Endothelial cell of umbilical vein (primary cell): ENCODE measurements at regions of chr19 and their contacts with region 1.

Region 1: DNA sequence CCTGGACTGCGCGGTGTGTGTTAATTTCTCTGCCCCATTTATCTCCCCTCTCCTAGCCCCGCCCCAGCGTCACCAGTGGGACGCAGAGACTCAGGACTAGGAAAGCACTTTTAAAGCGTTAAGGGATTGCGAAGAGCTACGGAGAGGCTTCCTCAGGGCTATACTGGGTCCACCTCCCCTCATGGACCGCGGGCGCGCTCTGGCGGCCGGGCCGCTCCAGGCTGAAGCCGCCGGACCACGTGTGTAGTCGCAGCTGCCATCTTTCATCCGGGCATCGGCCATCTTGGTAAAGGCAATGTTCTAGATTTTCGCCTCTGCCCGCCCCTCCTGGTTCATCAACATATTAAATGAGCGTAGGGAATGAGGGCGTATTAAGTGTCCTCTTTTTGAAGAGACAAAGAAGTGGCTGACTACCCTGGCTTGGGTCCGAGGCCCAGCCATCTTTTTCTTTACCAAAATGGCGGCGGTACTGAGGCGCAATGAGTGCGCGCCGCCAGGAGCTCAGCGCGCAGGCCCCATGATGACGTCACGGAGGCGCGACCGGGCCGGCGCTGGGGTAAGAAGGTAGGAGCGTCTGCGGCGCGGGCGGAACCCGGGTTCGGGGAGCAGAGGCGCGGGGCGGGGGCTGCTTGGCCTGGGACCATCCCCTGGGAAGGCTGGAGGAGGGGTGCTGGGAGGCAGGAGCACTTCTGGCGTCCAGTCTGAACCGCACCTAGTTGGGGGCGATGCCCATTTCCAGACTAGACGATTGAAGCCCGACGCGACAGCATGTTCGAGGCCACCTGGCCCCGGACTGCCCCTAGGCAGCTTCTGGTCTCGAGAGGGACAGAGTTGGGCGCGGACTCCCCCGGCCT is at the start of gene CCDC124:
- DNase-seq: peak; percentile 92
- H3K4me3 ChIP-seq: peak within 1 kb of the TSS; percentile 93 to 98 (median 95)
- H3K27ac ChIP-seq: peak within 1 kb of the TSS; percentile 91
- H3K4me1 ChIP-seq: peaks cover 16% of the 10 kb centered on the region
- H3K27me3 ChIP-seq: no peaks in the 10 kb centered on the region
- CTCF ChIP-seq: peak; percentile 92 to 96
- POLR2A ChIP-seq: peak; percentile 78
- total RNA-seq, gene CCDC124: 115 and 123 TPM in 2 replicates

Region 2: DNA sequence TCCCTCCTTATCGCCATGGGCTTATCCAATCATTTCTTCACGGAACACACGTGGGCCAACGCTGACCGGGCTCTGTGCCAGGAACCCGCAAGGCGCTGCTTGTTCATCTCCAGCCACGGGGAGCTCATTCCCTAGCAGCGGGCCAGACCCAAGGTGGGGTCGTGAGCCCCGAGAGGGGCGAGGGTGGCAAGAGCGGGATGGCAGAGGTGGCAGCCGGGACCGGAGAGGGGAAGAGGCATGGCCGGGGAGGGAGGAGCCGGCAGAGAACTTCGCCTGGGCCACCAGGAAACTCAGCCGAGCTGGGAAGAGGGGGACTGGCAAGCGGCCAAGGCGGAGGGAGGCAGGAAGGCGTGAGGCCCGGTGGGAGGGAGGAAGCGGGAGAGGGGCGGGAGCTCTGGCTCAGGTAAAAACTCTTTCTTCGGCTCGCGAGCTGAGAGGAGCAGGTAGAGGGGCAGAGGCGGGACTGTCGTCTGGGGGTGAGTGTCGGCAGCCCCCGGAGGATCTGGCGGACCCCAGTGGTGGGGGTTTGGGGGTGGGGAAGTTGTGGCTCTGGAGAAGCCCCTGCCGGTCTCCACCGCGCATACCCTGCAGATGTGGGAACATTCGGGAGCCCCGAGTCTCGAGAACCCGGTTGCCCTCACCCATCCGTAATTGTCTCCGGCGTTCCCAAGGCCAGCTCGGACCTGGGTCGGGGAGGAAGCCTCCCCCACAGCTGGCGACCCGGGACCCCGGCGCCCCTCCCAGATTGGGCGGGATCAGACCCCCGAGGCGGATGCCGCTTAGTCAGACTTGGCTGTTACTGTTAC is 137.8 kb before region 1 on chr19 and contains the start of gene B3GNT3:
- CTCF ChIA-PET with region 1: no interaction called
- POLR2A ChIA-PET with region 1: no interaction called
- dilution Hi-C with region 1: no loop called
- intact Hi-C with region 1: loop called (anchors 5 kb)
- DNase-seq: no peak
- H3K4me3 ChIP-seq: peak within 1 kb of the TSS in 1 of 3 experiments; percentile 16
- H3K27ac ChIP-seq: no peak within 1 kb of the TSS
- H3K4me1 ChIP-seq: peaks cover 3% of the 10 kb centered on the region
- H3K27me3 ChIP-seq: peaks cover 13 to 14% of the 10 kb centered on the region in 2 experiments
- CTCF ChIP-seq: no peak
- POLR2A ChIP-seq: no peak
- total RNA-seq, gene B3GNT3: not detected in 2 replicates

Region 3: GRCh38 chr19:17865364-17866311 is 67.1 kb before region 1 on chr19:
- CTCF ChIA-PET with region 1: interaction called, 118 read pairs
- POLR2A ChIA-PET with region 1: interaction called, 3 read pairs
- dilution Hi-C with region 1: no loop called
- intact Hi-C with region 1: loop called (anchors 1 kb)
- DNase-seq: no peak
- H3K4me3 ChIP-seq: no peak overlapping the region
- H3K27ac ChIP-seq: no peak overlapping the region
- H3K4me1 ChIP-seq: peaks cover 11% of the 10 kb centered on the region
- H3K27me3 ChIP-seq: peaks cover 21 to 22% of the 10 kb centered on the region in 2 experiments
- CTCF ChIP-seq: no peak
- POLR2A ChIP-seq: peak; percentile 82

Region 4: GRCh38 chr19:17873786-17874757 is 58.6 kb before region 1 on chr19:
- CTCF ChIA-PET with region 1: interaction called, 118 read pairs
- POLR2A ChIA-PET with region 1: interaction called, 3 read pairs
- dilution Hi-C with region 1: no loop called
- intact Hi-C with region 1: loop called (anchors 1 kb)
- DNase-seq: no peak
- H3K4me3 ChIP-seq: no peak overlapping the region
- H3K27ac ChIP-seq: no peak overlapping the region
- H3K4me1 ChIP-seq: no peaks in the 10 kb centered on the region
- H3K27me3 ChIP-seq: peaks cover 32 to 44% of the 10 kb centered on the region in 2 experiments
- CTCF ChIP-seq: no peak
- POLR2A ChIP-seq: no peak

Region 5: DNA sequence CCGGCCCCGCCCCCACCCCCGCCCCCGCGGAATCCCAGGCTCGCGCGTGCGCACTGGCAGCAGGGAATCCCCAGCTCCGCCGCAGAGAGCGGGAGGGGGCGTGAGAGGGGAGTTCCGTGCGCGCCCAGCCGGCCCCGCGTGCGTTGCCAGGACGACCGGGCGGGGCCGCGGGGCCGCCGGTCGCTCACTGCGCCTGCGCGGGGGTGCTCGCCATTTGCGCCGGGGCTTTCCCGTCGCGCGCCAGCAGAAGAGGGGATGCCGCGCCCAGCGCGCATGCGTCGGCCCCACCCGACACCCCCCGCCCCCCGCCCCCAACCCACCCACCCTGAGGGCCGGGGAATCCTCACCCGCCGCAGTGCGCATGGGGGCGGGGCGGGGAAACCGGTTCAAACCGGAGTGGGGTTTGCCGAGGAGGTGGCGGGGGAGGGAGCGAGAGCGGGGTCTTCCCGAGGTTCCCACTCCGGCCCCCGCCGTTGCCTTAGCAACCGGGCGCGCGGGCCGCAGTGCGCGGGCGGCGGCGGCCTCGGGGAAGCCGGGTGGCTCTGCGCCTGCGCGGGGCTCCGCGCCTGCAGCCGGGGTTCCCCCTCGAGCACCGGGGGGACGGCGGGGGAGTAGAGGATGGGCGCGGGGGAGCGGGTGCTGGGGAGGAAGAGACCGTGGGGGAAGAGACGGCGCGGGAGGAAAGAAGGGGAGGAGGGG is 15.3 kb after region 1 on chr19:
- CTCF ChIA-PET with region 1: interaction called, 19 read pairs
- POLR2A ChIA-PET with region 1: interaction called, 3 read pairs
- dilution Hi-C with region 1: no loop called
- intact Hi-C with region 1: loop called (anchors 2 kb)
- DNase-seq: peak; percentile 93
- H3K4me3 ChIP-seq: peak overlapping the region in 2 of 3 experiments; percentile 36 to 54
- H3K27ac ChIP-seq: no peak overlapping the region
- H3K4me1 ChIP-seq: peaks cover 8% of the 10 kb centered on the region
- H3K27me3 ChIP-seq: peaks cover 39 to 40% of the 10 kb centered on the region in 2 experiments
- CTCF ChIP-seq: no peak
- POLR2A ChIP-seq: no peak

Region 6: DNA sequence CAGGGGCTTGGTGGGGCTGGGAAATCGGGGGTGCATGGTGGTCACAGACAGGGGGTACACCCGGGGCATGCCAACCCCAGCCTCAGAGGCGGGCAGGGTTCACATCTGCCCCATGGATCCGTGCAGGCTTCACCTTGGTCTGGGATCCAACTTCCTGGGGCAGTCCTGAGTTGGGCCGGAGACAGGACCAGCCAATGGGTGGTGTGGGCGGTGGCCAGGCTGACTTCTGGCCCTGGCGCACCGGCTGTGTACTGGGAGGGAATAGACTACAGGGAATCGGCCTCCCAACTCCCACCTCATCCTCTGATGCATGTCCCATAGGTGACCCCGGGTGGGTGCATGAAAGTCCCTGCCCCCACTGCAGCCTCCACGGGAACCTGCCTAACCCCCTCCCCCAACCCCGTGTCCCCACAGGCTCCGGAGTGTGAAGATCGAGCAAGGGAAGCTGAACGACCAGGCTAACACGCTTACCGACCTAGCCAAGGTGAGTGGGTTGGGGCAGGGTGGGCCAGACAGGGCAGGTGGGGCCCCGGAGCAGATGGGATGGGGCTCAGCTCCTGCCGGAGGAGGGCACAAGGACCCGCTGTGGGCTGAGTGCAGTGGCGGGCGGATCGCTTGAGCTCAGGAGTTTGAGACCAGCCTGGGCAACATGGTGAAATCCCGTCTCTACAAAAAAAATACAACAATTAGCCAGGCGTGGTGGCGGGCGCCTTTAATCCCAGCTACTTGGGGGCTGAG is 60.5 kb after region 1 on chr19:
- CTCF ChIA-PET with region 1: interaction called, 203 read pairs
- POLR2A ChIA-PET with region 1: no interaction called
- dilution Hi-C with region 1: no loop called
- intact Hi-C with region 1: no loop called
- DNase-seq: no peak
- H3K4me3 ChIP-seq: no peak overlapping the region
- H3K27ac ChIP-seq: no peak overlapping the region
- H3K4me1 ChIP-seq: no peaks in the 10 kb centered on the region
- H3K27me3 ChIP-seq: no peaks in the 10 kb centered on the region
- CTCF ChIP-seq: no peak
- POLR2A ChIP-seq: no peak

Region 7: DNA sequence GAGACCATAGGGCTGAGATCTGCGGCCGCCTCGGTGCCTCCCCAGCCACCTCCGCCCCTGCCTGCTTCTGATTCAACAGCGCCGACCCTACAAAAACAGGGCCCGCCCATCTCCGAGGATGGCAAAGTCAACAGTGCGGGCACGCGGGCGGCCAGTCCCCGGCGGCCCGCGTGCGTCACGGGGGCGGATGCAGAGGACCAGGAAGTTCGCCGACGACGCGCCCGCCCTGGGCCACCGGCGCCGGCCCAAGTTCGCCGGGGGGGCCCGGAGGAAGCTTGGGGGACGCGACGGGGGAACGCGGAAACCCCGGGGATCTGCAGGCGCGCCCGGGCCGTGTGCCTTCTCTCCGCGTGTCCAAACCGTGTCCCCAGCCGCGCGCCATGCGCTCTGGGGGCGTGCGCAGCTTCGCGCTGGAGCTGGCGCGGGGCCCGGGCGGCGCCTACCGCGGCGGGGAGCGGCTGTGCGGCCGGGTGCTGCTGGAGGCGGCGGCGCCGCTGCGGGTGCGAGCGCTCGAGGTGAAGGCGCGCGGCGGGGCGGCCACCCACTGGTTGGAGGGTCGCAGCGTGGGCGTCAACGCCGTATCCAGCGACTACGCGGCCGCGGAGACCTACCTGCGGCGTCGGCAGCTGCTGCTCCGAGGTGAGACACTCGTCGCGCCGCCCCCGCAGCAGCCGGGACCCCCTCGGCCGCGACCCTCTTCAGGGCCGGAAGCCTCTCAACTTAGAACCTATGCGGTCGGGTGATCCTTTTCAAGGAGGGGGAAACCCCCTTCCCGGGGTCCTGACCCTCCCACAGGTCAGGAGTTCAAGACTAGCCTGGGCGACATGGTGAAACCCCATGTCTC is 68.4 kb after region 1 on chr19:
- CTCF ChIA-PET with region 1: interaction called, 203 read pairs
- POLR2A ChIA-PET with region 1: no interaction called
- dilution Hi-C with region 1: no loop called
- intact Hi-C with region 1: no loop called
- DNase-seq: peak; percentile 82
- H3K4me3 ChIP-seq: peak overlapping the region; percentile 73 to 85 (median 77)
- H3K27ac ChIP-seq: peak overlapping the region; percentile 90
- H3K4me1 ChIP-seq: peaks cover 15% of the 10 kb centered on the region
- H3K27me3 ChIP-seq: no peaks in the 10 kb centered on the region
- CTCF ChIP-seq: no peak
- POLR2A ChIP-seq: peak; percentile 66

Region 8: DNA sequence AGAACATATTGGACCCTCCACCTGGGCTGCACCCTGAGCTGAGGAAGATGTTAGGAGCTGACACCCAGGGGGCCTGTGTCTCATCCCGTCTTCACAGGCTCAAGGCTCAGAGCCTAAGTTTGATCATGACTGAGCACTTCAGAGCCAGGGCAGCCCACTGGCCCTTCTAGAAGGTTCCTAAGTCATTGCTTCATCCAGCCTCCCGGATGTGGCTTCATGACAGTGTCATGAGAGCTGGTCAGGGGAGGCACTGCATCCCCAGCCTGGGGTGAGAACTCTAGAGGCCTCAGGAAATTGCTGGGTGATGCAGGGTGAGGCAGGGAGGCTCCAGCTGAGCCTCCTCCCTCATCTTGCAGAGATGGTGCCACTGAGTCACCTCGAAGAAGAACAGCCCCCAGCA is 195.3 kb after region 1 on chr19:
- CTCF ChIA-PET with region 1: no interaction called
- POLR2A ChIA-PET with region 1: no interaction called
- dilution Hi-C with region 1: no loop called
- intact Hi-C with region 1: no loop called
- DNase-seq: no peak
- H3K4me3 ChIP-seq: no peak overlapping the region
- H3K27ac ChIP-seq: no peak overlapping the region
- H3K4me1 ChIP-seq: no peaks in the 10 kb centered on the region
- H3K27me3 ChIP-seq: no peaks in the 10 kb centered on the region
- CTCF ChIP-seq: no peak
- POLR2A ChIP-seq: no peak

Region 9: GRCh38 chr19:18150776-18151624 is 218.3 kb after region 1 on chr19:
- CTCF ChIA-PET with region 1: no interaction called
- POLR2A ChIA-PET with region 1: no interaction called
- dilution Hi-C with region 1: no loop called
- intact Hi-C with region 1: no loop called
- DNase-seq: no peak
- H3K4me3 ChIP-seq: no peak overlapping the region
- H3K27ac ChIP-seq: no peak overlapping the region
- H3K4me1 ChIP-seq: peaks cover 14% of the 10 kb centered on the region
- H3K27me3 ChIP-seq: no peaks in the 10 kb centered on the region
- CTCF ChIP-seq: no peak
- POLR2A ChIP-seq: no peak